Activated CD4-positive, alpha-beta T cell treated with anti-CD3 and anti-CD28 coated beads for 36 hours (primary cell): ENCODE measurements at regions of chr5 and their contacts with region 1.

Region 1: DNA sequence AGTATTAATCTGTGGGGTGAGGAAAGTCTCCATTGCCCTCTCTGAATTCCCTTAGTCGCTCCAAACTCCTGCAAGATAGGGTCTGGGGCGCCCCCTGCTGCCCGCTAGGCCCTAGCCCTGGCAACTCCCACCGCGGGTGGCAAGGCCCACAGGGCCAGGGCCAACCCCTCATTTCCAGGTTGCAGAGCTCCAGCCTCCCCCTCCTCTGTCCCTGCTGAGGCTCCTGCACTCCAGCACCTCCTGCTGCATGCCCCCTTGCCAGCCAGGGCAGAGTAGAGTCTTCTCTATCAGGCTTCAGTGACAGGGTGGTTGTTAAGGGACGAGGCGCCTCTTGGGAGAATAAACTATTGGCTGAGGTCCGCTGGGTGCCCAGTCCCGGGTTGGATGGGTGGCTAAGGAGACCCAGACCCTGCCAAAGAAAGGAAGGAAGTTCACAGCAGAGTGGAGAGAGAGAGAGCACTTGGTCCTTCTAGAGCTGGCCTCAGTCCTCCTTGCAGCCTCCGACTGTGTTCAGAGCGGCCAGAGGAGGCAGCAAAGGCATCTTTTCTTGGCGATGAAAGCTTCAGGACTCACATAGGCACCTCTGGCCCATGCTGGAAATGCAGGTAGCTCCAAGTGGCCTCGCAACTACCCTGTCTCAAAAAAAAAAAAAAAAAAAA is 45.6 kb downstream of the SAR1B start:
- DNase-seq: peak; percentile 95
- ATAC-seq: peak; percentile 91
- H3K4me3 Mint-ChIP-seq: no peak overlapping the region
- H3K27ac Mint-ChIP-seq: peak overlapping the region; percentile 78
- H3K4me1 Mint-ChIP-seq: peaks cover 14% of the 10 kb centered on the region
- H3K27me3 Mint-ChIP-seq: no peaks in the 10 kb centered on the region

Region 2: DNA sequence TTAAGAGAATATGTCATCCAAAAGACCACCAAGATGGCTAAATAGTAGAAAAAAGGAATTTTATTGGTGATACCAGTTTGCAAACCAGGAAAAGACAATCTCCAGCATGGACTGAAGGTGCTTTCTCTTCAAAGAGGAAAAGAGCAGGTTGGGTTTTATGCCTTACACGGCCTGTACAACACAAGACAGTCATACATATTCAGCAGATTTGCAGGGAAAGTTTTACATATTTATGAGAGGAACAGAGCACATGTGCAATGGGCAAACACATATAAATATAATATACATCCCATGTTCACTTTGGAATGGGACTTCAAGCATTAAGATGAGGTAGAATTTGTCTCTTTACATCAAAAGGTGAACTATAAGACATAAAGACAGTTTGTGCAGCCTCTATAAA is 290.8 kb before region 1 on chr5:
- CTCF ChIA-PET with region 1: interaction called, 21 read pairs
- POLR2A ChIA-PET with region 1: no interaction called
- intact Hi-C with region 1: no loop called
- DNase-seq: no peak
- ATAC-seq: no peak
- H3K4me3 Mint-ChIP-seq: no peak overlapping the region
- H3K27ac Mint-ChIP-seq: no peak overlapping the region
- H3K4me1 Mint-ChIP-seq: no peaks in the 10 kb centered on the region
- H3K27me3 Mint-ChIP-seq: no peaks in the 10 kb centered on the region

Region 3: GRCh38 chr5:134411546-134412266 is 175.3 kb before region 1 on chr5 and contains the start of gene CDKN2AIPNL:
- CTCF ChIA-PET with region 1: interaction called, 12 read pairs
- POLR2A ChIA-PET with region 1: interaction called, 4 read pairs
- intact Hi-C with region 1: loop called (anchors 1 to 5 kb)
- DNase-seq: peak; percentile 95
- ATAC-seq: peak; percentile 100
- H3K4me3 Mint-ChIP-seq: peak within 1 kb of the TSS; percentile 96
- H3K27ac Mint-ChIP-seq: peak within 1 kb of the TSS; percentile 92
- H3K4me1 Mint-ChIP-seq: peaks cover 35% of the 10 kb centered on the region
- H3K27me3 Mint-ChIP-seq: no peaks in the 10 kb centered on the region
- total RNA-seq, gene CDKN2AIPNL: 36.1 to 42.0 TPM

Region 4: DNA sequence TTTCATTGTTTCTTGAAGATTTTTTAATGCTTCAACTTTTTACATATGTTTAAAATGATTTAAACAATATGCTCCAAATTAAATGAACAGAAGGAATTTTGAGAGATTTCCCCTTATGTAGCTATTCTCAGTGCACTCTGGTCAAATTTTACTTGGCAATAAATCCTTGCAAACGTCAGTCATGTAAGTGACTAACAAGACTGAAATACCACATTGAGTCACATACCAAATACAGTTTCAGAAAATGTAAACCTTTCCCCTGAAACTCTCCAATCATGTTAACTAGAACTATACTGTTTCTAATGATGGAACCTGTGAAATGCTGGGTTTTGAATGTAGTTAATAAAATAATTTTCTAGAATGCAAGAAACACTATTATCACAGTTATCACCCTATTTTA is 16.1 kb after region 1 on chr5:
- CTCF ChIA-PET with region 1: interaction called, 34 read pairs
- POLR2A ChIA-PET with region 1: no interaction called
- intact Hi-C with region 1: loop called in 1 of 2 experiments (anchors 1 kb)
- DNase-seq: no peak
- ATAC-seq: peak; percentile 91
- H3K4me3 Mint-ChIP-seq: peak overlapping the region; percentile 10
- H3K27ac Mint-ChIP-seq: peak overlapping the region; percentile 25
- H3K4me1 Mint-ChIP-seq: peaks cover 54% of the 10 kb centered on the region
- H3K27me3 Mint-ChIP-seq: no peaks in the 10 kb centered on the region

Region 5: GRCh38 chr5:134738133-134738962 is 151.4 kb after region 1 on chr5 and contains the start of gene CAMLG:
- CTCF ChIA-PET with region 1: interaction called, 7 read pairs
- POLR2A ChIA-PET with region 1: interaction called, 3 read pairs
- intact Hi-C with region 1: loop called (anchors 1 to 5 kb)
- DNase-seq: peak; percentile 99
- ATAC-seq: peak; percentile 97
- H3K4me3 Mint-ChIP-seq: peak within 1 kb of the TSS; percentile 94
- H3K27ac Mint-ChIP-seq: peak within 1 kb of the TSS; percentile 95
- H3K4me1 Mint-ChIP-seq: peaks cover 27% of the 10 kb centered on the region
- H3K27me3 Mint-ChIP-seq: no peaks in the 10 kb centered on the region
- total RNA-seq, gene CAMLG: 19.8 to 35.2 TPM

Region 6: GRCh38 chr5:134819404-134819963 is 232.5 kb after region 1 on chr5:
- CTCF ChIA-PET with region 1: no interaction called
- POLR2A ChIA-PET with region 1: no interaction called
- intact Hi-C with region 1: no loop called
- DNase-seq: no peak
- ATAC-seq: no peak
- H3K4me3 Mint-ChIP-seq: no peak overlapping the region
- H3K27ac Mint-ChIP-seq: no peak overlapping the region
- H3K4me1 Mint-ChIP-seq: no peaks in the 10 kb centered on the region
- H3K27me3 Mint-ChIP-seq: no peaks in the 10 kb centered on the region